ENCODE measurements at regions of chr9 and their contacts with region 1.

Region 1: DNA sequence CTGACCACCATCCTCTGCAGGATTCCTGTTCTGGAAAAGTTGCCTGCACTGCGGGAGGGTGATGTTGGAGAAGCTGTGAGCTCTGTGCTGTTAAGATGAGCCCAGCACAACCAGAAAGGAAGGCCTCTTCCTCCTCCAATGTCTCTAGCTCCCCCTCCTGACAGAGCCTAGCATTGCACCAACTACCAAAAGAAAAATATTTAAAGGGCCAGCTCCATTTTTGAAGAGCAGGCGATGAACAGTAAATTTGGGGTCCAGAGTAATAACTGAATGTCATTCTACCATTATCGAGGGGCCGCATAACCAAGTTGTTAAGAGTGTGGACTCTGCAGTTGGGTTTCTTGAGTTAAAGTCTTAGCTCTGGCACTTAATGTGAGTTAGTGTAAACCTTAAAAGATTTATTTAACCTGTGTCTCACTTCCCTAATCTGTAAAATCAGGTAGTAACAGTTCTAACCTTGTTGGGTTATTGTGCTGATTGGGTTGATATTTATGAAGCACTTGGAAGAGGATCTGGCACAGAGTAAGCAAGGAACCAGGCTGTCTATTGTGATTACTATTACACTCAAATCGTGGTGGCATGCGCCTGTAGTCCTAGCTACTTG is 3.9 kb downstream of the TEX53 start:
- DNase-seq: peak; percentile 79
- H3K4me3 Mint-ChIP-seq: no peak overlapping the region
- H3K27ac Mint-ChIP-seq: no peak overlapping the region
- H3K4me1 Mint-ChIP-seq: no peaks in the 10 kb centered on the region
- H3K27me3 Mint-ChIP-seq: no peaks in the 10 kb centered on the region
- CTCF ChIP-seq: peak; percentile 83

Region 2: DNA sequence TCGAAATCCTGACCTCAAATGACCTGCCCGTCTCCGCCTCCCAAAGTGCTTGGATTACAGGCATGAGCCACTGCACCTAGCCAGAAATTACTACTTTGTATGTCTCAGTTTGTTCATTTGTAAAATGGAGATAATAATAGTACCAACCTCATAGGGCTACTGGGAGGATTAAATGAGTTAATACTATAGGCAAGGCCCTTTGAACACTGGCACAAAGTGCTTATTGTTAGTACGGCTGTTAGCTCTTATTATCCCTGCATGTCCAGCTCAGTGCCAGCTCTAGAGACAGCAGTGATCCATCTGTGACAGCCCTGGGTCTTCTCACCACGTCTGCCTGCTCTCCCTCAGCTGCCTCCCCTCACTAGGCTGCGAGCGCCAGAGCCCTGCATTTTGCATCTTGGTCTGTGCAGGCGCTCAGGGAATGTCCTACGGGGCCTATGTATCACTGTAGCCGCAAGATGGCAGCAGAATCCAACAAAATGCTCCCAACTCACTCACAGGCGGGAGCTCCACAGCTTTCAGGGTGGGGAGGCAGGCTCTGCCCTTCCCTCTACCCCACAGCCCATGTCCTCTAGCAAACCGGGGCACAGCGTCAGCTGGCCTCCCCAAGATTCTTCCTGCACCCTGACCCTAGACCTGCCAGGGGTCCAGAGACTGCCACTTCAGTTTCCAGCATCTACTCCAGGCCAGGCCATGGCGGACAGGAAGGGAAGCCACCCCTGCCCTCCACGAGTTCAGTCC is 248.2 kb before region 1 on chr9:
- CTCF ChIA-PET with region 1: interaction called, 138 read pairs
- POLR2A ChIA-PET with region 1: interaction called, 10 read pairs
- intact Hi-C with region 1: loop called (anchors 1 kb)
- DNase-seq: peak; percentile 84
- H3K4me3 Mint-ChIP-seq: no peak overlapping the region
- H3K27ac Mint-ChIP-seq: no peak overlapping the region
- H3K4me1 Mint-ChIP-seq: peaks cover 11% of the 10 kb centered on the region
- H3K27me3 Mint-ChIP-seq: no peaks in the 10 kb centered on the region
- CTCF ChIP-seq: peak; percentile 83

Region 3: GRCh38 chr9:114487607-114488300 is 165.9 kb before region 1 on chr9:
- CTCF ChIA-PET with region 1: interaction called, 70 read pairs
- POLR2A ChIA-PET with region 1: no interaction called
- intact Hi-C with region 1: loop called (anchors 1 kb)
- DNase-seq: peak; percentile 89
- H3K4me3 Mint-ChIP-seq: no peak overlapping the region
- H3K27ac Mint-ChIP-seq: no peak overlapping the region
- H3K4me1 Mint-ChIP-seq: peaks cover 22% of the 10 kb centered on the region
- H3K27me3 Mint-ChIP-seq: no peaks in the 10 kb centered on the region
- CTCF ChIP-seq: peak; percentile 83

Region 4: DNA sequence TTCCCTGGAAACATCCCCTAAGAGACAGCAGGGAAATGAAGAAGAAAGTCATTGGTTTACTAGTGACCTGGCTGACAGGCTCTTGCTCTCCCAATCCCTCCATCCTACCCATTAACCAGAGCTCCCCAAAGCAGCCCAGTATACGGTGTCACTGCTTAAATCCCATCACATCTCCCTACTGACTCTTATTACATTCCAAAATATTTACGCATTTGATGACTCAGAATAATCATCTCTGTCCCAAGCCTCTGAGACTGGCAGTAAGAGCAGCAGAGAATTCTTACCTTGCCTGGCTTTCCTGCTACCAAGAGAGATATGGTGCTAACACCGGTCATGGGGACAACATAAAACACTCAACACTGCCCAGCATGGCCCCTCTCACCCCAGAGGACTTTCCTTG is 128.2 kb before region 1 on chr9:
- CTCF ChIA-PET with region 1: interaction called, 10 read pairs
- POLR2A ChIA-PET with region 1: no interaction called
- intact Hi-C with region 1: no loop called
- DNase-seq: peak; percentile 48
- H3K4me3 Mint-ChIP-seq: no peak overlapping the region
- H3K27ac Mint-ChIP-seq: no peak overlapping the region
- H3K4me1 Mint-ChIP-seq: peaks cover 6% of the 10 kb centered on the region
- H3K27me3 Mint-ChIP-seq: peaks cover 10% of the 10 kb centered on the region
- CTCF ChIP-seq: no peak

Region 5: GRCh38 chr9:114587385-114588202 is 66.1 kb before region 1 on chr9 and contains the start of gene ATP6V1G1:
- CTCF ChIA-PET with region 1: interaction called, 8 read pairs
- POLR2A ChIA-PET with region 1: interaction called, 11 read pairs
- intact Hi-C with region 1: loop called (anchors 2 kb)
- DNase-seq: peak; percentile 99
- H3K4me3 Mint-ChIP-seq: peak within 1 kb of the TSS; percentile 100
- H3K27ac Mint-ChIP-seq: peak within 1 kb of the TSS; percentile 100
- H3K4me1 Mint-ChIP-seq: peaks cover 35% of the 10 kb centered on the region
- H3K27me3 Mint-ChIP-seq: no peaks in the 10 kb centered on the region
- CTCF ChIP-seq: no peak
- total RNA-seq, gene ATP6V1G1: 87.1 and 118 TPM in 2 replicates

Region 6: GRCh38 chr9:114824110-114824509 is 170.5 kb after region 1 on chr9:
- CTCF ChIA-PET with region 1: no interaction called
- POLR2A ChIA-PET with region 1: no interaction called
- intact Hi-C with region 1: no loop called
- DNase-seq: no peak
- H3K4me3 Mint-ChIP-seq: no peak overlapping the region
- H3K27ac Mint-ChIP-seq: no peak overlapping the region
- H3K4me1 Mint-ChIP-seq: no peaks in the 10 kb centered on the region
- H3K27me3 Mint-ChIP-seq: no peaks in the 10 kb centered on the region
- CTCF ChIP-seq: no peak

Region 7: GRCh38 chr9:114953917-114954316 is 300.3 kb after region 1 on chr9:
- CTCF ChIA-PET with region 1: no interaction called
- POLR2A ChIA-PET with region 1: no interaction called
- intact Hi-C with region 1: no loop called
- DNase-seq: peak; percentile 95
- H3K4me3 Mint-ChIP-seq: no peak overlapping the region
- H3K27ac Mint-ChIP-seq: peak overlapping the region; percentile 49
- H3K4me1 Mint-ChIP-seq: peaks cover 42% of the 10 kb centered on the region
- H3K27me3 Mint-ChIP-seq: no peaks in the 10 kb centered on the region
- CTCF ChIP-seq: no peak

Measured in MCF 10A (cell line).